SK-N-SH (cell line): ENCODE measurements at regions of chr17 and their contacts with region 1.

Region 1: DNA sequence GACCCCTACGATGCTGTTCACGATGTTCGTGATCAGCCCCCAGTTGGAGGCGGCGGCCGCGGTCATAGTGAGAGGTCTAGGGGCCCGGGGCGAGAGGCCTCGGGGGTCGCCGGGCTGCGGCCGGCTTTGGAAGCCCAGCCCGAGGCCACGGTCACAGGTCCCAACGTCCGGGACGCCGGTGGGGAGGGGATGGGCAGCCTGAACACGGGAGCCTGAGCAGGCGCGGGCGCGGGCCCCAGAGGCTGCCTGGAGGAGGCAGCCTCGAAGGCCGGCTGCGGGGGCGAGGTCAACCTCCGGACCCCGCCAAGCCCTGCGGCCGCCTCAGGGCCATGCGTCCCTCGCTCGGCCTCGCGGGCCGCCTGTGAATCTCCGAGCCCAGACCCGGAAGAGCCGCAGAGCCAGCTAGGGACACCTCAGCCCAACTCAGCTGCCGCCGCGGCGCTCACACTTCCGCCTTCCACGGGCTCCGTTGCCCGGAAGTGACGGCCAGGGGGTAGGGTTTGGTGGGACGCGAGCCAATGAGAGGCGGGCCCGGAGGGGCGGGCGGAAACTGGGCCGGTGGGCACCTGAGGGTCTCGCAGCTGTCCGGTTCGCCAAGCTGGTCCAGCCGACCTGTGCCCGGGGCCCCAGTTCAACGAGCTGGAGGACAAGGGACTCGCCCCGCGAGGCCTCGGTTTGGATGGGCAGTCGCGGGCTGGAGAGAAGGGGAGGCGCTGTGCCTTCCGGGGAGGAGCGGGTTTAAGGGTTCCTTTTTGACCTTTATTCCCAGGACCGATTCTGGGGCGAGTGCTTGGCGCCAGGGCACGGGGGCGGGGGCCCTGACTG is at the start of gene SLC38A10:
- DNase-seq: peak; percentile 100
- H3K4me3 ChIP-seq: peak within 1 kb of the TSS; percentile 76 to 88
- H3K27ac ChIP-seq: peak within 1 kb of the TSS; percentile 77 to 87
- H3K4me1 ChIP-seq: peaks cover 8 to 27% of the 10 kb centered on the region in 2 experiments; a peak in 2 of 4 replicates
- H3K27me3 ChIP-seq: no peaks in the 10 kb centered on the region
- CTCF ChIP-seq: peak; percentile 34; the same call in 1 of the 2 replicates
- EP300 ChIP-seq: peak in 1 of 2 experiments; percentile 30; a peak in 1 of 4 replicates
- RAD21 ChIP-seq: no peak
- polyA plus RNA-seq, gene SLC38A10: 64.3 and 82.2 TPM in 2 replicates

Region 2: GRCh38 chr17:81171941-81172340 is 123.1 kb before region 1 on chr17:
- CTCF ChIA-PET with region 1: no interaction called
- POLR2A ChIA-PET with region 1: no interaction called
- DNase-seq: no peak
- H3K4me3 ChIP-seq: no peak overlapping the region
- H3K27ac ChIP-seq: no peak overlapping the region
- H3K4me1 ChIP-seq: peaks cover 0 to under 1% of the 10 kb centered on the region in 2 experiments; a peak in 1 of 4 replicates
- H3K27me3 ChIP-seq: peaks cover 9% of the 10 kb centered on the region; the same call in 1 of the 2 replicates
- CTCF ChIP-seq: no peak
- EP300 ChIP-seq: no peak
- RAD21 ChIP-seq: no peak

Region 3: GRCh38 chr17:81253358-81254131 is 41.5 kb before region 1 on chr17:
- CTCF ChIA-PET with region 1: interaction called, 51 read pairs
- POLR2A ChIA-PET with region 1: no interaction called
- DNase-seq: peak; percentile 92
- H3K4me3 ChIP-seq: peak overlapping the region in 1 of 2 experiments; percentile 21; a peak in 1 of 4 replicates
- H3K27ac ChIP-seq: no peak overlapping the region; a peak in 1 of 4 replicates
- H3K4me1 ChIP-seq: peaks cover 0 to 38% of the 10 kb centered on the region in 2 experiments; a peak in 1 of 4 replicates
- H3K27me3 ChIP-seq: no peaks in the 10 kb centered on the region
- CTCF ChIP-seq: peak; percentile 92
- EP300 ChIP-seq: no peak
- RAD21 ChIP-seq: peak; percentile 99

Region 4: DNA sequence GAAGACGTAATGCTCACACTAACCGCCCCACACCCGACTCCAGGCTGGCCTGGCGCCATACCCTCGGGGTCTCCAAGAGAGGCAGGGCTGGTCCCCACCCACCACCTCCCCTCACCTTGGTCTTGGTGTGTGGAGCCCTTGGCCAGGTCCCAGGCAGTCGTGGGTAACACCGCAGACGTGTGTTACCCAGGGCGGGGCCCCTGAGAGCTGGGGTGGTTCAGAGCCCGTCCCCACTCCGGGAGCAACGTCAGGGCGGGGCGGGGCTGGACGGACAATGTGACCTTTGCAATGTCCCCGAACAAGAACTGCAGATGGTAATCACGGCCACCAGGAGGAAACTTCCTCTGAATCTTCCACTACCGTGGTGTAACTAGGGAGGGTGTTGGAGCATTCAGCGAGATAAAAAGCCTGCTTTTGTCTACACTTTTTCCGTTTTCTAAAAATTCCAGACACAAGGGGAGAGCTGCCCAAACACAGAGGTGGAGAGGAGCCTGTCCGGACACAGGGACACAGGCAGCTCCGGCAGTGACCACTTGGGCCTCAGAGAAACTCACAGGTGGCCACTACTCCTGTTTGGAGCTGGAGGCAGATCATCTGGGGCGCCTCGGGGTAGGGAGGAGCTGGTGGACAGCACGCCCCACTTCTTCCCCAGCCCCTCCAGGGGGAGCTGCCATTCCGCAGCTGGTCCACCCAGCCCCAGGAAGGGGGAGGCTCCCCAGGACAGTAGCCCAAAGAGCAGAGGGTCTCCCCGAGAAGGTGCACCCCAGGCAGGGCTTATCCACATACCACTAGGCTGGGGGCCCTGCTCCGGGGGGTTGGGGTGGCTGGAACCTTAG is 14.2 kb after region 1 on chr17:
- CTCF ChIA-PET with region 1: interaction called, 58 read pairs
- POLR2A ChIA-PET with region 1: interaction called, 15 read pairs
- DNase-seq: peak; percentile 84
- H3K4me3 ChIP-seq: no peak overlapping the region
- H3K27ac ChIP-seq: peak overlapping the region in 1 of 2 experiments; percentile 99; a peak in 2 of 4 replicates
- H3K4me1 ChIP-seq: peaks cover 0 to 87% of the 10 kb centered on the region in 2 experiments; a peak in 2 of 4 replicates
- H3K27me3 ChIP-seq: peaks cover 6% of the 10 kb centered on the region; the same call in 1 of the 2 replicates
- CTCF ChIP-seq: peak; percentile 50
- EP300 ChIP-seq: no peak
- RAD21 ChIP-seq: peak; percentile 46

Region 5: GRCh38 chr17:81328978-81329919 is 34.2 kb after region 1 on chr17:
- CTCF ChIA-PET with region 1: interaction called, 33 read pairs
- POLR2A ChIA-PET with region 1: interaction called, 7 read pairs
- DNase-seq: peak; percentile 91
- H3K4me3 ChIP-seq: no peak overlapping the region
- H3K27ac ChIP-seq: peak overlapping the region; percentile 63 to 97
- H3K4me1 ChIP-seq: peaks cover 19 to 80% of the 10 kb centered on the region in 2 experiments
- H3K27me3 ChIP-seq: no peaks in the 10 kb centered on the region
- CTCF ChIP-seq: no peak
- EP300 ChIP-seq: peak; percentile 71 to 87; a peak in 3 of 4 replicates
- RAD21 ChIP-seq: peak; percentile 15; the same call in 1 of the 2 replicates

Region 6: GRCh38 chr17:81394921-81395599 is 100.0 kb after region 1 on chr17 and contains the start of gene BAHCC1:
- CTCF ChIA-PET with region 1: interaction called, 14 read pairs
- POLR2A ChIA-PET with region 1: no interaction called
- DNase-seq: peak; percentile 97
- H3K4me3 ChIP-seq: peak within 1 kb of the TSS; percentile 60 to 80
- H3K27ac ChIP-seq: peak within 1 kb of the TSS; percentile 83 to 89
- H3K4me1 ChIP-seq: peaks cover 31 to 68% of the 10 kb centered on the region in 2 experiments
- H3K27me3 ChIP-seq: no peaks in the 10 kb centered on the region
- CTCF ChIP-seq: no peak
- EP300 ChIP-seq: peak in 1 of 2 experiments; percentile 51; a peak in 1 of 4 replicates
- RAD21 ChIP-seq: no peak; the same call in 1 of the 2 replicates
- polyA plus RNA-seq, gene BAHCC1: 3.6 and 6.4 TPM in 2 replicates